Tibial artery (tissue), 4 donors: ENCODE measurements at regions of chr17 and their contacts with region 1.

Region 1: DNA sequence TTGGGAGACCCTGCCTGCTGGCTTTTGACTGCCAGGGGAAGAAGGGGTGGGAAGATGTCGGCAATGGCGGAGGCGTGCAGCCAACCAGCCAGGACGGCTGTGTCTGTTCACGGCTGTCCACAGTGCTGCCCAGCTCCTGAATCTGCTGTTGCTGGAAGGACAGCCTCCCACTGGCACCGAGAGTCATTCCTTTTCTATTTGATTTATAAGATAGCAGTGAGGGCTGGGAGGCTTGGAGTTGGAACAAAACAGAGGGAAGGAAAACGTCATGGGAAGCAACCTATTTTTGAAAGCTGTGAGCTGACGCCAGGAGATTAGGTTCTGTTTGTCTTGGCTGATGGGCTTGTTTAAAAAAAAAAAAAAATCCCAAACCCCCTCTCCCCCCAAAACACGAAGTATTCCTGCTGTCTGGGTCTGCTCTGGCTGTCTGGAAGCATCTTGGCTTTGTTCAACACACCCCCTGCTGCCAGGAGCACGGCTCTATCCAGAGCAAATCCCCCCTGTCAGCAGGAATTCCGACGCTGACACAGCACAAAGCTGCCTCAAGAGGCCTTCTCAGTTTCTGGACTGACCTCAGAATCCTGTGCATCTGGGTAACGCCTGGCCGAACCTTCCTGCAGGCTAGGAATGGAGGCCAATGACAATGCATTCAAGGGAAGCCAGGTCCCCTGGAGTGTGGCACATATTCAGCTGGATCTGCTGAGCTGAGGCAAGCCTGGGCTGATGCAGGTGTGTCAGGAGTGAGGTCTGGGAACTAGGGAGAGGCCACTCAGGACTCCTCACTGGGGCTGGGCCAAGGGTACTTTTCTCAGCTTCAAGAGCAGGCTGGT is 41.0 kb upstream of the SREBF1 start:
- DNase-seq: peak; percentile 81 to 93
- H3K4me3 ChIP-seq: peak overlapping the region; percentile 2 to 29
- H3K27ac ChIP-seq: peak overlapping the region; percentile 82 to 83
- H3K4me1 ChIP-seq: peaks cover 0 to 46% (median 36%) of the 10 kb centered on the region in 4 donors
- H3K27me3 ChIP-seq: no peaks in the 10 kb centered on the region
- CTCF ChIP-seq: no peak

Region 2: GRCh38 chr17:17591355-17592298 is 286.1 kb before region 1 on chr17 and contains the start of gene PEMT:
- intact Hi-C with region 1: loop called (anchors 10 kb)
- DNase-seq: peak; percentile 98
- H3K4me3 ChIP-seq: peak within 1 kb of the TSS; percentile 62 to 69
- H3K27ac ChIP-seq: peak within 1 kb of the TSS; percentile 75 to 81
- H3K4me1 ChIP-seq: peaks cover 0 to 27% (median 20%) of the 10 kb centered on the region in 4 donors
- H3K27me3 ChIP-seq: no peaks in the 10 kb centered on the region
- CTCF ChIP-seq: no peak

Region 3: GRCh38 chr17:17729620-17730249 is 148.0 kb before region 1 on chr17:
- intact Hi-C with region 1: no loop called
- DNase-seq: no peak
- H3K4me3 ChIP-seq: no peak overlapping the region
- H3K27ac ChIP-seq: no peak overlapping the region
- H3K4me1 ChIP-seq: peaks cover 0 to 31% (median 5%) of the 10 kb centered on the region in 4 donors
- H3K27me3 ChIP-seq: no peaks in the 10 kb centered on the region
- CTCF ChIP-seq: peak in 1 of 2 experiments; percentile 26

Region 4: DNA sequence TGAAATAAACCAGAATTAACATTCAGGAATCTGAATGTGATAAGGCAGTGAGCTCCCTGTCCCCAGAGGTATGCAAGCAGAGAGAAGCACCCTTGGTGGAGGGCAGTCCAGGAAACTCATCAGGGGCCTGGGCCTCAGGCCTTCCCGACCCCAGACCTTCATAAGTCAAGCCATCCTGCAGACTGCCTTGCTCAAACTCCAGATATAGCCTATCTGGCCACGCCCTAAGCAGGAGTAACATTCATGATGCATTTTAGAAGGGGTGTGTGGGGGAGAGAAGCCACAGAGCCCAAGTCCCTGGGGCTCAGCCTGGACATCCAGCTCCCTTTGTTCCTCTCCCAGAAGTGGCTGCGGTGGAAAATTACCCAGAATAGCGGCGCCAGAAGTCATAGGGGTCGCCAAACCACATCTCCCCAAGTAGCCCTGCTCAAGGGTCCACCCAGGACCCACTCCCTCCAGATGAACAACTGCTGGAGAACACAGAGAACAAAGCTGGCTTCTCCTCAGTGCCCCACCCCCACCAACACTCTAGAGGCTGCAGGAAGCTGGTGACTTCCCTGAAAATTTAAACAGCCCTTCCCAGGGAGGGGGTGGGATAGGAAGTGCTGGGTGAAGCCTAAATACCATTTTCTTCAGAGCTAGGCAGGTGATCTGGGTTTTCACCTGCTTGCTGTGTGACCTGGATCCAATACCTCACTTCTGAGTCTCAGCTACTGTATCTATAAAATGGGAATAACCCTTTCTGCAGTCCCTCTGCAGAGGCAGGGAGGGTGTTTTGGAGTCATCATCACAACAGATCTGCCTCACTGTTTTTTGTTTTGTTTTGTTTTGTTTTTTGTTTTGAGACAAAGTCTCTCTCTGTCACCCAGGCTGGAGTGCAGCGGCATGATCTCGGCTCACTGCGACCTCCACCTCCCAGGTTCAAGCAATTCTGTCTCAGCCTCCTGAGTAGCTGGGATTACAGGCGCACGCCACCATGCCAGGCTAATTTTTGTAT is 39.5 kb before region 1 on chr17:
- intact Hi-C with region 1: loop called (anchors 1 kb)
- DNase-seq: peak; percentile 73 to 87
- H3K4me3 ChIP-seq: no peak overlapping the region
- H3K27ac ChIP-seq: peak overlapping the region; percentile 96 to 100
- H3K4me1 ChIP-seq: peaks cover 0 to 83% (median 72%) of the 10 kb centered on the region in 4 donors
- H3K27me3 ChIP-seq: no peaks in the 10 kb centered on the region
- CTCF ChIP-seq: no peak